Left colon (tissue), 2 donors: ENCODE measurements at regions of chr6 and their contacts with region 1.

Region 1: GRCh38 chr6:722077-722524 is 29.2 kb upstream of the EXOC2 start:
- DNase-seq: peak; percentile 70 to 90
- ATAC-seq: peak; percentile 91

Region 2: GRCh38 chr6:624979-625378 is 97.1 kb before region 1 on chr6:
- intact Hi-C with region 1: loop called in 1 of 2 experiments (anchors 10 kb)
- DNase-seq: peak in 1 of 2 donors; percentile 10
- ATAC-seq: no peak

Region 3: DNA sequence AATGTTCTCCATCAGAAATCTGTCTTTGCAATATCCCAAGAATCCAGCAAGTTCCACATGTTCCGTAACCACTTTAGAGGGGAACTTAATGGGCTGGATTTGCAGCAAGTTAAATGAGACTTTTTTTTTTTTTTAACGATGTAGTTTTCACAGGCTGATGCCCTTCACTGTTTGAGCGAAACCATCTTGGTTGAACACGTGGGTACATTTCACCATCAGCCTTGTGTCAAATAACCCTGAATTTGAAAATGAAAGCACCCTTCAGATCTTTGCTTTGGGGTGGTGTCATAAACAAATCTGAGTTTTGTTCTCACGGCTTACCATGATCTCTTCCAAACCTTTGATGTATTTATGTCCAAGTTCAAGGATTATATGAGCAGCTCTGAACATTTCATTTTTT is 44.5 kb after region 1 on chr6:
- intact Hi-C with region 1: no loop called
- DNase-seq: no peak
- ATAC-seq: no peak

Region 4: DNA sequence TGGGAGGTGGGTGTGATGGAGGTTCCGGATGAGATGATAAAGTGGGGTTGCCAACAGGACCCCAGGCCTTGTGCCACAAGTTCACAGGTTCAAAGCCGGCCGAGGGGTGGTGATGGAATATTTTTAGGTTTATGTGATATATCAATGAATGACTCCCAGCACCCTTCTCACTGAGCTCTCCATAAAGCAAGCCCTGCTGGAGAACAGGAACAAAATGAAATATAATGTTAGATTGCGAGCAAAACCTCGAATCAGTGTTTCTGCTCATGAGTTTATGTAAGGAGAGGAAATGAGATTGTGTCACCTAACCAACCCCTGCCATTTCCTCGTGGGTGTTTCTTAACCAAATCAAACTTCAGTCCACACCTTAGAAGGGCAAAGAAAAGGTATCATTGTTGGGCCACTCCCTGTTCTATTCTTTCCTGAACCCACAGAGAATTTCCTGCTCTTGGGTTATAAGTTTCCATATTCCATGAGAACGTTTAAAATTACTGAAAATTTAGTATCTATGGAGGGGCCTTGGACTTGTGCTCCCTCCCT is 163.0 kb after region 1 on chr6:
- intact Hi-C with region 1: no loop called
- DNase-seq: peak; percentile 25 to 49
- ATAC-seq: peak; percentile 94

Region 5: DNA sequence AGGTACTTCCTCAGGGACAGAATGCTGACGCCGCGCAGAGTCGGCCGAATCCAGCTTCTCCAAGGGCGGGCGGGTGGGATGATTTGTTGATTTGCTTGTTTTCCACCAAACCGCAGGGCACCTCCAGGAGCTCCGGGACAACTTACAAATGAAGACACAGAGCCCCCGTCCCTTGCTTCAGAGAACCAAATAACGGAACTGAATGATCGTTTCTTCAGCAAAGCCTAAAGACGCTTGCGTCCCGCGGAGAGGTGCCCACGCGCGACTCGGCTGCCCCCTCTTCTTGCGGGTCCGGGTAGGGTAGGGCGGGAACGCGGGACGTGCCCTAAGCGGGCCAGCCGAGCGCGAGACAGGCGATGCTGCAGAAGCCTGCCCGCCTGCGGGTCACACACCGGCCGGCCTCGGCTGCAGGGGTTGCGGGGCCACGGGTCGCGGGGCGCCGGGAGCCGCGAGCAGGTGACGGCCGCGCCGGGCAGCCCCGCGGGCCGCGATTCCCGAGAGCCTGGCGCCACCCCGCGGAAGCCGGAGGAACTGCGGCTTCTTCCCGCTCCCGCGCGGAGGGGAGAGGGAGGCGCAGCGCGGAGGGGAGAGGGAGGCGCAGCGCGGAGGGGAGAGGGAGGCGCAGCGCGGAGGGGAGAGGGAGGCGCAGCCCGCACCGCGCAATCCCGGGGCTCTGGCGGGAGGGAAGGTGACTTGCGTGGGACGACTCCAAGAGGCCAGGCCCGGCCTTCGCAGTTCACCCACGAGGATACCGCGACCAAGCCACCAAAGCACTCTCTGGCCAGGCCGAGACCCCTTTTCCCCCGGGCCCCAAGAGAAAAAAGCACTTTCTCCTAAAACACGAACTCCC is 659.6 kb after region 1 on chr6:
- intact Hi-C with region 1: loop called in 1 of 2 experiments (anchors 10 kb)
- DNase-seq: peak in 1 of 2 donors; percentile 61
- ATAC-seq: peak; percentile 71